K562 (cell line): ENCODE measurements at regions of chr15 and their contacts with region 1.

Region 1: DNA sequence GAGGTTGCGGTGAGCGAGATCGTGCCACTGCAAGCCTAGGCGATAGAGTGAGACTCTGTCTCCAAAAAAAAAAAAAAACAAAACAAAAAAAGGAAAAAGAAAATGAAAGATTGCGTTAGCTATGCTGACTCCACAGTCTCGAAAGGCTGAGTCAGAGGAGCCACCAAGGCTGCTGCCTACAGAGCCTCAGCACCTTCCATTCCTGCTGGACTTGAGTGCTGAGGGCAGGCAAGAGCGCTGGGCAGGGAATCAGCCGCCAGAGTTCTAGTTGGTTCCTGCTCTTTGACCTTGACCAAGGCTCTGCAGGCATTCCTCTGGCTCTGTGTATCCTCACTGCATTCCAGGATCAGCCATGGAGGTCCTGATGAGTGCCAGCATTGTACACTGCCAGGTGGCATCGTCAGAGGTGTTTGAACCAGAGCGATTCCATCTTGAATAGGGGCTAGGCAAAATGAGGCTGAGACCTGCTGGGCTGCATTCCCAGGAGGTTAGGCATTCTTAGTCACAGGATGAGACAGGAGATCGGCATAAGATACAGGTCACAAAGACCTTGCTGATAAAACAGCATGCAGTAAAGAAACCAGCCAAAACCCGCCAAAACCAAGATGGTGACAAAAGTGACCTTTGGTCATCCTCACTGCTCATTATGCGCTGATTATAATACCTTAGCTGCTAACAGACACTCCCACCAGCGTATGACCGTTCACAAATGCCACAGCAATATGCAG is 5.9 kb downstream of the MESP2 start:
- DNase-seq: peak in 1 of 4 experiments; percentile 58
- ATAC-seq: peak; percentile 64
- H3K4me3 ChIP-seq: no peak overlapping the region
- H3K27ac ChIP-seq: peak overlapping the region; percentile 77
- H3K4me1 ChIP-seq: peaks cover 37 to 43% of the 10 kb centered on the region in 2 experiments
- H3K27me3 ChIP-seq: no peaks in the 10 kb centered on the region
- CTCF ChIP-seq: no peak
- EP300 ChIP-seq: peak; percentile 19; the same call in 1 of the 2 replicates
- POLR2A ChIP-seq: no peak
- RAD21 ChIP-seq: peak in 1 of 2 experiments; percentile 37; a peak in 1 of 4 replicates

Region 2: DNA sequence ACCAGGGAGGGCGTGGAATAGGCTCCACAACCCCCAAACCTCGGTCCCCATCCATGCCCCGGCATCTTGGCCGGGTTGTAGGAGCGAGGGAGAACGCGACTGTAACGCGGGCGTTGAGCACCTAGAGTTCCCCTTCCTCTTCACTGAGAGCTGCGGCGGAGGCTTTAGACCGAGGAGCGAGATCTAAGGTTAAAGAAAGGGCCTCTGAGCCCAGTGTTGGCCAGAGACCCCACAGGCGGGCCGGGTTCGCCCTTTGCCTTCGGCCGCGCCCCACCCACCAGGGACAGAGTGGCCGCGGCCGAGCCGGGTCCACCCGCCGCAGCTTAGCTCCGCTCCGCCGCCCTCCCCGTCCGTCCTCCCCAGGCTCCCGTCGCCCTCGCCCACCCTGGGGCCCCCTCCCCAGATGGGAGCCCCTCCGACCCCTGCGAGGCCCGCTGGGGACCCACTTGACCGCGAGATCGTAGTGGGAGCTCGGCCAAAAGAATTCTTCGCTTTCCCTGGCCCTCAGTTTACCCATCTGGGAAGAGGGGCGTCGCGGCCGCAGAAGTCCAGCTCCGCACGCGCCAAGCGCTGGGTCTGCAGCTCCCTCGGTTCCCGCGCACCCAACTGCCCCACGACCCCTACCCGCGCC is 32.2 kb after region 1 on chr15:
- CTCF ChIA-PET with region 1: no interaction called
- POLR2A ChIA-PET with region 1: interaction called, 3 read pairs
- in situ Hi-C with region 1: no loop called
- intact Hi-C with region 1: loop called (anchors 2 kb)
- DNase-seq: no peak
- ATAC-seq: no peak
- H3K4me3 ChIP-seq: peak overlapping the region; percentile 61; the same call in 1 of the 2 replicates
- H3K27ac ChIP-seq: peak overlapping the region; percentile 47; the same call in 1 of the 3 replicates
- H3K4me1 ChIP-seq: peaks cover 0 to 42% of the 10 kb centered on the region in 2 experiments; a peak in 3 of 5 replicates
- H3K27me3 ChIP-seq: no peaks in the 10 kb centered on the region
- CTCF ChIP-seq: no peak
- EP300 ChIP-seq: no peak
- POLR2A ChIP-seq: no peak
- RAD21 ChIP-seq: no peak